Breast epithelium (tissue), 4 donors: ENCODE measurements at regions of chr4 and their contacts with region 1.

Region 1: DNA sequence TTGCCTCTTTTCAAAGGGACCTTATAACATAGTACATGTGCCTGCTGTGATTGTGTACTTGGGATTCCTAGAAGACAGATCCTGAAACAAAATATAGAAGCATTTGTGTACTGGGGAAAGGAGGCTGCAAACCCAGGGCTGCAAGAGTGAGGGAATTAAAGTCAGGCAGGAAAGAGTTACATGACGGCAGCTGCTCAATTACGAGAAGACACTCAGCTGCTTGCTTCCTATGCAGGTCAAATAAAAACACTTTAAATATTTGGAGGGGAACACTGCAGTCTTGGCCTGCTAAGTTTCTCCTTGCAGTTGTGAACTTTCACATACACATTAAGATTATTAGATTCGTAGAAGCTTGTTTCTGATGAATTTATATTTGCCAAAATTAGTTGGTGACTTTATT is 191.9 kb upstream of the CXCL13 start:
- DNase-seq: no peak
- H3K4me3 ChIP-seq: no peak overlapping the region
- H3K27ac ChIP-seq: no peak overlapping the region
- H3K4me1 ChIP-seq: no peaks in the 10 kb centered on the region
- H3K27me3 ChIP-seq: no peaks in the 10 kb centered on the region
- CTCF ChIP-seq: no peak
- POLR2A ChIP-seq: no peak

Region 2: DNA sequence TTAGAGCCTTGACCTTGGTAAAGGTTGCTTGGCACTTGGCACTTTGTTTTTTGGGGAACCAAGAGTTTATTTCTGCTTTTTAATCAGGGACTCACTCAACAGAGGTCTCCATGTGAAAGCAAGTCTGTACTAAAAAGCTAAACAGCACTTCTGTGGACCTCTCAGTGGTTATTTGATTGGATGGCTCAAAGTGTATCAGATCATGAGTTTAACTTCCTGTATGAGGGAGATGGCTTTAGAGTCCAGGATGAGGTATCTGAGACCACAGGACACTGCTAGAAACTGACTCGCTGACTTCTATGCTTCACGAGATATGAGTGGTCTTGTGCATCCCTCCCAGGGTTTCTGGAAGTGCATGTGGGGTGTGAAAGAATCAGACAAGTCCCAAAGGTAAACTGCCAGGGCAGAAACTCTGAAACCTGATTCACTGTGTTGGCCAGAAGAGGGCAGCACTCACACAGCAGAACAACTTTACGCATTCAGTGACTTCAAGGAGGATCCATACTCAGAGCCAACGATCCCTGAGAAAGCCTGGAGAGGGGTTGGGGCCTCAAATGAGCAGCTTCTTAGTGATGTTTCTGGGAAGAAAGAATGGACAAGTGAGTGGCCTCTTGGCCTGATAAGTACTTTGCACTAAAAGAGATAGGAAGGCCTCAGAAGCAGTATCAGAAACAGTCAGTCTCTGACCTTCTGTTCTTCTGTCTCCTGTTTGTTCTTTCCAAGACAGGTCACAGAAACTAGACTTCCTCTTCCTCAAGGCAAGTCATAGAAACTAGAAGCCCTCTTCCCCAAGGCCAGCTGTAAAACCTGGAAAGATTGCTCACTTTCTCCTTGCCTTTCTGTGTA is 28.4 kb before region 1 on chr4:
- intact Hi-C with region 1: loop called (anchors 1 kb)
- DNase-seq: peak; percentile 57 to 59
- H3K4me3 ChIP-seq: no peak overlapping the region
- H3K27ac ChIP-seq: no peak overlapping the region
- H3K4me1 ChIP-seq: no peaks in the 10 kb centered on the region
- H3K27me3 ChIP-seq: no peaks in the 10 kb centered on the region
- CTCF ChIP-seq: peak; percentile 55 to 85 (median 70)
- POLR2A ChIP-seq: no peak